Right cardiac atrium (tissue), 5 donors: ENCODE measurements at regions of chr2 and their contacts with region 1.

Region 1: DNA sequence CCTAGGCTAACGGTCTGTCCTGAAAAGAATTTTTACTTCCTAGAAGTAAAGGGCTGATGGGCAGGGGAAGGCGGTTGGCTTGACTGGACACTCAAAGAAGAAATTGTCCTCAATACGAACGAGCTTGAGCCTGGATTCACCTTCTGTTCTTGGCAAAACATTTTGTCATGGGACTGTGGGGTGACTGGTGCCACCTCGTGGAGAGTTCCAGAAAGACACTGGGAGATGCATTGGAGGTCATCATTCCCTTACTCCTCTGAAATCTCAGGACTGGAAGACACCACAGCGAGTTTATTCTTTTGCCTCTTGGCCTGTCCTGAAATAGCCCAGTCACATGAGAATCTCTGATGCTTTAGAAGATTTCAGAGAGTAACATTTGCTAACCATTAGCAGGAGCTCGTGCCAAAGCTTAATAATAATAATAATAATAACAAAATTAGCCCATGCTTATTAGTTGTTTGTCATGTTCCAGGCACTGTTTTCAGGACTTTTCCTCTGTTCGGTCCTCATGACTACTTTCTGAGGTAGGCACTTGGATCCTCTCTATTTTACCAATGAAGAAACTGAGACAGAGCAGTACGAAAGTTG is 44.5 kb downstream of the TMEM182 start:
- DNase-seq: peak; percentile 55 to 83 (median 76)
- ATAC-seq: peak; percentile 67 to 74
- H3K4me3 ChIP-seq: no peak overlapping the region
- H3K27ac ChIP-seq: no peak overlapping the region
- H3K4me1 ChIP-seq: peaks cover 7% of the 10 kb centered on the region
- H3K27me3 ChIP-seq: no peaks in the 10 kb centered on the region

Region 2: GRCh38 chr2:102753563-102754159 is 52.7 kb before region 1 on chr2:
- intact Hi-C with region 1: loop called in 3 of 4 experiments (anchors 2 to 10 kb)
- DNase-seq: no peak
- ATAC-seq: peak; percentile 35 to 40
- H3K4me3 ChIP-seq: no peak overlapping the region
- H3K27ac ChIP-seq: no peak overlapping the region
- H3K4me1 ChIP-seq: no peaks in the 10 kb centered on the region
- H3K27me3 ChIP-seq: no peaks in the 10 kb centered on the region

Region 3: GRCh38 chr2:102761763-102762162 is 44.6 kb before region 1 on chr2 and contains the start of gene TMEM182:
- intact Hi-C with region 1: loop called in 2 of 4 experiments (anchors 5 to 10 kb)
- DNase-seq: peak; percentile 49 to 79 (median 75)
- ATAC-seq: peak; percentile 88 to 91
- H3K4me3 ChIP-seq: peak within 1 kb of the TSS; percentile 68
- H3K27ac ChIP-seq: no peak within 1 kb of the TSS
- H3K4me1 ChIP-seq: peaks cover 1% of the 10 kb centered on the region
- H3K27me3 ChIP-seq: no peaks in the 10 kb centered on the region
- total RNA-seq, gene TMEM182: 106 to 206 (median 182) TPM